ENCODE measurements at regions of chr10 and their contacts with region 1.

Region 1: DNA sequence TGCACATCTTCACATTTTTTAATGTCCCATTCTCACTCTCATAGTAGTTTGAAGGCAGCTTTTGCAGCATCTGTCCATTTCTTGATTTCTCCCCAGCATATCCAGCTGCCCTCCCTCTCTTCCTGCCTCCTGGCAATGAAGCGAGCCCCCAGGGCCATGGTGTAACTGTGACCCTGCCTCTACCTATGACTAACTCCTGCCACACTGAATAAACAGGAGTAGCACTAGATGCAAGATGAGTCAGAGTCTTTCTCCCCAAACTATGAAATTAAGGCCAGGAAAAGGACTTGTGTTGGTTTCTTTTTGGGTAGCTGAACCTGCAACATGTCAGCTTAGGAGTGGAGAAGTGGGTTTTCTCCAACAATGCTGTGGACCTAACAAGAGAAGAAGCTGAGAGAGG is 329.0 kb downstream of the RNLS start:
- DNase-seq: no peak

Region 2: DNA sequence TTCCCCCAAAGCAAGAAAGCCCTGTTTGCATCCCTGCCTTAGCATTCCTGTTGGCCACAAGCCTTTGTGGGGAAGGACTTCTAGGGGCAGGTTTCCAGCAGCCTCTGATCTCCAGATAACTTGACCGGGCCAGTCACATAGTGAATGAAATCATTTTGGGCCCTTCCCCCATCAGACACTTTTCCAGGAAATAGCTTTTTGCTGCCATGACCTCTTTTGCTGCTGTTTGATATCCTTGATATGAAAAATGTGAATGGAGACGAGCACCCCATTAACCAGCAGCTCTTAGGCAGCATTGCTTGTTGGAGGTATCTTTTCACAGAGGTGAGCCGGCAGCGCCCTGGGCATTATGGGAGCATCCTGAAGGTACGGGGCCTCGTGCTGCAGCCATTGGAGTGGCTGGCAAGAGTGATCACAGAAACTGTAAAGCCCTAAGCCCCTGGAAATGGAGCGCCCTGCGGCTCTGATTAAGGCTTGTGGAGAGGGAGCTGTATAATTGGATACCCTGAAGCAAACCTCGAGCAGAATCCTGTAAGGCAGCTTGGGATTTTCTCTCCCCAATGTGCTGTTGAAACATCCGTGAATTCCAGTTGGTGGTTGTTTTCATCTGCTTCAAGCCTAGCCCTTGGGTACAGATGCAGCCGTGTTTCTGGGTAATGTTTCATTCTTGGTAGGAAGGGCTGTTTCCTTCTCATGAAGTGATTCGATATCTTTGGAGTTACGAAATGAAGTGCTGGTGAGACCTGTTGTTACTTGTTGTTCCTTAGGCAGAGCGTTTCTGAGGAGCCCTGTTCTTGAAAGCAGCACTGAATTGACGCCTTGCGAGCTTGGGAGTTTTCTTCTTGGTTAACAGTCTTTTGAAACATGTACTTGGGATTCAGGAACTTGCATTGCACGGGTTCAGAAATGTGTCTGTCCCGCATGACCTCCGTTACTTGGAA is 211.7 kb before region 1 on chr10:
- intact Hi-C with region 1: loop called (anchors 10 kb)
- DNase-seq: no peak